Naive thymus-derived CD4-positive, alpha-beta T cell (primary cell): ENCODE measurements at regions of chr18 and their contacts with region 1.

Region 1: DNA sequence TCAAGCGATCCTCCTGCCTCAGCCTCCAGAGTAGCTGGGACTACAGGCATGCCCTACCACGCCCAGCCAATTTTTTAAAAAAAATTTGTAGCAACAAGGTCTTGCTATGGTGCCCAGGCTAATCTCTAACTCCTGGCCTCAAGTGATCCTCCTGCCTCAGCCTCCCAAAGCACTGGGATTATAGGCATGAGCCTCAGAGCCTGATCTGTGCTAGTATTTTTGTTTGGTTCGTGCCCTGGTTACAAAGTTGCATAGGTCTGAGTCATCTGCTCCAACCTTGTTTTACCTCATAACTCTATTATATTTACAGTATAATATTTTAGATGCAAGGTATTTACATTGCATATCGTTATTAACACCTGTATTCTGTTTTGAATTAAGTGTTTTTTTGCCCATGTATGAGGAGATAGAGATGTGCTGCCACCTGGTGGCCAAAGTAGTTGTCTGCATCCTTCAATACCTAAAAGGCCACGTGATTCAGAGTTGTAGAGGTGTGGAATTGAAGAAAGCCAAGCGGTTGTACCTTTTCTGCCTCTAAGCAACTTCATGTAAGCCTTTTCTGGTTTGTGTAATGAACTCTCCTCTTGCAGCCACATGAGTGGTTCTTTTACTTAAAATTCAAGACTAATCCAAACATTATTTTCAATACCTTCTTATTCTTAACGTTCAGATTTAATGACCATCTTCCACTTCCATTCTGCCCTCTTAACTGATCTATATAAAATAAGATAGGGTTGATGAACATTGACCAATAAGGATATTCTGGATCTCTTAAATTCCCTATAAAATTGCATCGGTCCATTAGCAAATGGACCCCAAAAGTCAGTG is 19.9 kb upstream of the CABYR start:
- DNase-seq: peak; percentile 49 to 82 (median 74)
- ATAC-seq: peak; percentile 98
- H3K4me3 ChIP-seq: no peak overlapping the region
- H3K4me3 Mint-ChIP-seq: no peak overlapping the region
- H3K27ac ChIP-seq: no peak overlapping the region
- H3K27ac Mint-ChIP-seq: peak overlapping the region in 7 of 9 donors; percentile 2 to 82 (median 61)
- H3K4me1 ChIP-seq: peaks cover 0 to 6% of the 10 kb centered on the region in 2 donors
- H3K4me1 Mint-ChIP-seq: peaks cover 1 to 41% (median 22%) of the 10 kb centered on the region in 7 donors
- H3K27me3 ChIP-seq: no peaks in the 10 kb centered on the region
- H3K27me3 Mint-ChIP-seq: no peaks in the 10 kb centered on the region

Region 2: GRCh38 chr18:23619388-23619881 is 499.5 kb before region 1 on chr18:
- CTCF ChIA-PET with region 1: no interaction called
- POLR2A ChIA-PET with region 1: no interaction called
- intact Hi-C with region 1: loop called (anchors 1 kb)
- DNase-seq: peak in 2 of 9 donors; percentile 10 to 11
- ATAC-seq: peak; percentile 51
- H3K4me3 ChIP-seq: peak overlapping the region; percentile 35
- H3K4me3 Mint-ChIP-seq: peak overlapping the region in 9 of 10 donors; percentile 5 to 75 (median 48)
- H3K27ac ChIP-seq: no peak overlapping the region
- H3K27ac Mint-ChIP-seq: no peak overlapping the region
- H3K4me1 ChIP-seq: peaks cover 0 to 7% of the 10 kb centered on the region in 2 donors
- H3K4me1 Mint-ChIP-seq: peaks cover 0 to 16% (median 6%) of the 10 kb centered on the region in 7 donors
- H3K27me3 ChIP-seq: peaks cover 4 to 14% of the 10 kb centered on the region in 2 donors
- H3K27me3 Mint-ChIP-seq: peaks cover 33 to 54% (median 40%) of the 10 kb centered on the region in 5 donors

Region 3: DNA sequence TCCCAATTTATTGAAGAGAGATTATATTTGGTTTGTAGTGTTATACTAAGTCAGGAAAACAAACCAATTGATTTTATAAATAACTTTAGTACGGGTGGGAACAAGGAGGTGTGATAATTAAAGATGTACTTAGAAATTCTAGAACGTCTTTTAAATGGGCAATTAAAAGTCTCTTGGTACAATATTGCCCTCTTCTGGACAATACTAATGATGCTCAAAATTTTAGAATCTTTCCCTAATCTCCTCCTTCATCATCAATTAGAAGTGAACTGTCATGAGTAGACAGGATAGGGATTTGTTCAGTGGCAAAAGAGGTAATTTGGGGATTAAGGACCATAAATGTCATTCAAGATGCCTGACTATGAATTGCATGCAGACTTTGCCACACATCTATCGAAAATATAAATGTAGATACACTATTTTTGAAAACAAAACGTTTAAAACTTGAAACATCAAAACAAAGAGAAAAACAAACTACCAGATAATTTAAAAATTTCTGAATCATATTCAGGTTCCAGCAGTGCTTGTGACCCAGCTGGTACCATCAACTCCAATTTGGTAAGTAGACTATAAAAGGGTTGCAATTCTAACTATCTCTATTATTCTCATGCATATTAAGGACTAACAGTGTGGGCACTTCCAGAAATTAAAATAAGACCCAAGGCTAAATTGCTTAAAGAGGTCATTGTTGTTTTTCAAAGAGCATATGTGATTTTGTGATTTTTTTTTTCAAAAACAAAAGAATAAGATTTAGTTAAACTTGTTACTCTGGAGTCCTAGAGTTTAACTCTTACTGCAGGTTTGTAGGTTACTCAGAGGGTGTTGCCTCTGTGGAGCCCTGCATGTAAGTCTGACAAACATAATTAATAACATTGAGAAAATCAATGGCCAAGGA is 306.2 kb before region 1 on chr18:
- CTCF ChIA-PET with region 1: interaction called, 13 read pairs
- POLR2A ChIA-PET with region 1: no interaction called
- intact Hi-C with region 1: loop called (anchors 1 kb)
- DNase-seq: peak in 5 of 9 donors; percentile 21 to 46 (median 41)
- ATAC-seq: peak; percentile 61
- H3K4me3 ChIP-seq: no peak overlapping the region
- H3K4me3 Mint-ChIP-seq: no peak overlapping the region
- H3K27ac ChIP-seq: no peak overlapping the region
- H3K27ac Mint-ChIP-seq: peak overlapping the region in 1 of 9 donors; percentile 45
- H3K4me1 ChIP-seq: peaks cover 6 to 14% of the 10 kb centered on the region in 2 donors
- H3K4me1 Mint-ChIP-seq: peaks cover 4 to 29% (median 27%) of the 10 kb centered on the region in 7 donors
- H3K27me3 ChIP-seq: no peaks in the 10 kb centered on the region
- H3K27me3 Mint-ChIP-seq: peaks cover 0 to 18% (median 0%) of the 10 kb centered on the region in 5 donors

Region 4: GRCh38 chr18:23918401-23919032 is 200.4 kb before region 1 on chr18:
- CTCF ChIA-PET with region 1: interaction called, 6 read pairs
- POLR2A ChIA-PET with region 1: no interaction called
- intact Hi-C with region 1: loop called (anchors 1 kb)
- DNase-seq: peak; percentile 47 to 74 (median 61)
- ATAC-seq: peak; percentile 87
- H3K4me3 ChIP-seq: no peak overlapping the region
- H3K4me3 Mint-ChIP-seq: no peak overlapping the region
- H3K27ac ChIP-seq: no peak overlapping the region
- H3K27ac Mint-ChIP-seq: peak overlapping the region in 3 of 9 donors; percentile 20 to 63 (median 62)
- H3K4me1 ChIP-seq: peaks cover 8 to 15% of the 10 kb centered on the region in 2 donors
- H3K4me1 Mint-ChIP-seq: peaks cover 10 to 31% (median 25%) of the 10 kb centered on the region in 7 donors
- H3K27me3 ChIP-seq: no peaks in the 10 kb centered on the region
- H3K27me3 Mint-ChIP-seq: peaks cover 0 to 27% (median 5%) of the 10 kb centered on the region in 5 donors

Region 5: DNA sequence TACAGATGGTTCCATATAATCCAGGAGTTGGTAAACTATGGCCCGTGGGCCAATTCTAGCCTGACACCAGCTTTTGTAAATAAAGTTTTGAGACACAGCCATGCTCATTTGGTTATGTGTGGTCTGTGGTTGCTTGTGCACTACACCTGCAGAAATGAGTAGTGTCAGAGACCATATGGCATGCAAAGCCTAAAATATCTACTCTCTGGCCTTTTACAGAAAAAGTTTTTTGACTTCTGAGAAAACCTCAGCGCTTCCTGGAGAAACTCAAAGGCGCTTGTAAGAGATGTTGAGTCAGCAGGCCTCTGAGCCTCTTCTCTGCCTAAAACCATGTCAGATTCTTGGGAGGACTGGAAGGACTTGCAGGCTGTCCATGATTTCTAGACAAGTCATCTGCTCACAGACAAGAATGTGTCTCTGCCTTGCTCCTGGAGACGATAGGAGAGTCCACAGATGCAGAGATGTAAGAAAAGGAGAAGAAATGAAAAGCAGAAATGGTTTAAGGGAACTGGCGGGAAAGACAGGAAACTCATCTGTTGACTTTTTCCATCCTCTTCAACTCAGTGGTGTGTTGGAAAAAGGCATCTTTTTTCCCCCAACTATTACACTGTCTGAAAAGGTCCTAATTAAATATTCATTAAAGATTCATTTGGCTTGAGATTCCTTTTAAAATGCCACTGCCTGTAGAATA is 99.2 kb before region 1 on chr18:
- CTCF ChIA-PET with region 1: no interaction called
- POLR2A ChIA-PET with region 1: no interaction called
- intact Hi-C with region 1: loop called in 1 of 2 experiments (anchors 2 kb)
- DNase-seq: peak in 8 of 9 donors; percentile 53 to 74 (median 62)
- ATAC-seq: peak; percentile 76
- H3K4me3 ChIP-seq: peak overlapping the region; percentile 32
- H3K4me3 Mint-ChIP-seq: peak overlapping the region; percentile 63 to 97 (median 80)
- H3K27ac ChIP-seq: peak overlapping the region; percentile 53
- H3K27ac Mint-ChIP-seq: peak overlapping the region; percentile 75 to 97 (median 93)
- H3K4me1 ChIP-seq: peaks cover 79 to 84% of the 10 kb centered on the region in 2 donors
- H3K4me1 Mint-ChIP-seq: peaks cover 76 to 93% (median 86%) of the 10 kb centered on the region in 7 donors
- H3K27me3 ChIP-seq: no peaks in the 10 kb centered on the region
- H3K27me3 Mint-ChIP-seq: no peaks in the 10 kb centered on the region